AG04449 (cell line): ENCODE measurements at regions of chr3 and their contacts with region 1.

Region 1: DNA sequence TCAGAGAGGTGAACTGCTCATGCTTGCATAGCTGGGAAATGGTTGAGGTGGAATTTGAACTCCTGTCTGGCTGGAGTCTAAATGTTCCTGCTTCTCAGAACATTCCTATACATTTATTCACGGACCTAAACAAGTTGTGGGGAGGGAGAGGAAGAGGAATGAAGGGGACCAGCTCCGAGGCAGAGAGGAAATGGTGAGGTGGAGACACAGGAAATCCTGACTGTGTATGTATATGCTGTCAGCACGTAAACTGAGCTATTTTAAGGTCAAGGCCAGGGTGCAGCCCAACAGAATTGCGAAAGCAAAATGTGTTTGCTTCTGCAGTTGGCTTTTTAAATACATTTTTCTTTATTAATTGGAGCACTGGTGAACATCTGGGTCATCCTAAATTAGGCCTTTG is 74.1 kb upstream of the POMGNT2 start:
- DNase-seq: peak; percentile 89
- H3K4me3 ChIP-seq: no peak overlapping the region
- CTCF ChIP-seq: no peak

Region 2: DNA sequence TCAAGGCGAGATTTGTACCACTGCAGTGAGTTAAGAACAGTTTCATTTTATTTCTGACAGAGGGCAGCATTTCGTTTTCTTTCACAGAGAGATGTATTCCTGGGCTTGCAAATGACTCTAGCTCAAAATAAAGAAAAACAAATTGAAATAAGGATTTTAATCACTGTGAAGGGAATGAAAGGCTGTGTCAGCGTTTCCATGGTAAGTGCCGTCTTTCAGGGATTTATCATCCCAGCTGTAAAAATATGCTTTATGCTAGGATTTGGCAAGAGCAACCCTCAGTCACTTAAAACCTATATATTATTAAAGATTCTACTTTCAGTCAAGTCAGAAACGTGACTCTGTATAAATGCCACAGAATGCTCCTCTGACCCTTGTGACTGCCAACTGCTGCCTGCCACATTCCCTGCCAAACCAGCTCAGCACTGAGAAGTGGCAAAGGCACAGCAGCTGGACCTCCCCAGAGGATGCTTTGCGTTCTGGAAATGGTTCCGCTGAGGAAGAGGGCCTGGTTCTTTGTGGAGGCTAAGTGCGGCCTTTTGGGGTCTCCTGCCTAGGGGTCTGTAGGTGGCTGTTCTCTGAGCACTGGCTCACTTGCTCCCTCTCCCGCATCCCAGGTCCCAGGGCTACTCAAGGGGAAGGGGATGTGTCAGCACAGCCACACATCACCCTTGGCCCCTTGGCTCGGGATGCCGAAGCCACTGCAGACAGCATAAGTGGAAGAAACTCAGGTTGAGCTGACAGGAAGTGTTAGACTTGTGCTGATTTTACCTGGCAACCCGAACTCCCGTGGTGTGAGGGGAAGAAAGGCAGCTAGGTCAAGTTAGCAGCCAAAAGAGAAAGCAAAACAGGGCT is 17.6 kb before region 1 on chr3:
- CTCF ChIA-PET with region 1: interaction called, 10 read pairs
- POLR2A ChIA-PET with region 1: interaction called, 3 read pairs
- DNase-seq: peak; percentile 55
- H3K4me3 ChIP-seq: no peak overlapping the region
- CTCF ChIP-seq: peak; percentile 29

Region 3: DNA sequence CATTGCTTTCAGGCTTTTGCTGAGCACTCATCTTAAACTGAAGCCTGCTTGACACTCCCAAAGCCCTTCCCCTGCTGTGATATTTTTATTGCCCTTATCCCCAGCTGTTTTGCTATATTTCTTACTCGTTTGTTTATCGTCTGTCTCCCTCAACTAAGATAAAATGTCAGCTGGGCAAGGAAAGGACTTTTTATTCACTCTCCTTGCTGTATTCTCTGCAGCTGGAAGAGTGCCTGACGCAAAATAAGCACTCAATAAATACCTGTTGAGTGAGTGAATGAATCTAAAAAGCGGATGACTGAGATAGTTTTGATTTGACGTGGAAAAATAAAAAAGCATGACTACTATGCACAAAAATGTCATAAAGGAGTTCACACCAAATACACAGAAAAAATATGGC is 10.6 kb after region 1 on chr3:
- CTCF ChIA-PET with region 1: interaction called, 7 read pairs
- POLR2A ChIA-PET with region 1: interaction called, 10 read pairs
- DNase-seq: peak; percentile 85
- H3K4me3 ChIP-seq: no peak overlapping the region; the same call in 1 of the 2 replicates
- CTCF ChIP-seq: no peak

Region 4: DNA sequence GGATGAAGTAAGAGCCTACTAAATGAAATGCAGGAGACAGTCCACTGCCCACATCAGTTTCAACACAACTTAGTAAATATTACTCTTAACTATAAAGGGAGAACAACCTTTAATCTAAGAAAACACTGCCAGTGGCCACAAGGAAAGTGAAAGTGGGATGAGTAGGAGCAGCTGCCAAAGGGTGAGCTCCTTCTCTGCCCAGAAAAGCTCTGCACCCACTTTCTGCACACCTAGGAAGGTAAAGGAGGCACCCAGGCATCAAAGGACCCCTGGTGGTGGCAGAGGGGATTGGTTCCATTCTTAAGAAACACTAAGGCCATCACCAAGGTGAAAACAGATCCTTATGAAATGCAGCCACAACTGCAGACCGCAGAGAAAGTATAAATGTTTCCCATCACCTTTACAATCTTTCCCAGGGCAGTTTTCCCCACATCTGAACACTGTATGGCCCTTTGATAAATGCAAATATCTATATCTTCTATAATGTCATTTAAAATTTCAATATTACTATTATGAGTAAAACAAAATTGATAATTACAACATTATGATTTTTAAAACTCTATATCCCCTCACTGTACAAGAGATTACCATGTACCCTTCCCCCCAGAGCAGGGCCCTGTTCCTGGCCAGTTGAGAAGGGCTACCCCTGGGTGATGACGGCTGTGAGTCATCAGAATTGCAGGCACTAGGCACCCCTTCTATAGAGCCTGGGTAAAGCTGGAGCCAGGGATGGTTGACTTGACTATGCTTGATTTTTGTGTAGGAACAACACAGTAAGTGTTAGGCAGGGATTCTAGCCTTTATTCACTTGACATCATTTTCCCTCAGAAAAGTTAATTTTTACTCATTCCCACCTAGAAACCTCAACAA is 198.3 kb after region 1 on chr3:
- CTCF ChIA-PET with region 1: no interaction called
- POLR2A ChIA-PET with region 1: no interaction called
- DNase-seq: no peak
- H3K4me3 ChIP-seq: no peak overlapping the region
- CTCF ChIP-seq: peak; percentile 60